ENCODE measurements at regions of chr11 and their contacts with region 1.

Region 1: GRCh38 chr11:8263769-8264410 is at the start of gene LMO1:
- DNase-seq: peak; percentile 91
- ATAC-seq: peak; percentile 53
- H3K4me3 Mint-ChIP-seq: peak within 1 kb of the TSS; percentile 71
- H3K27ac Mint-ChIP-seq: no peak within 1 kb of the TSS
- H3K4me1 Mint-ChIP-seq: peaks cover 16% of the 10 kb centered on the region
- H3K27me3 Mint-ChIP-seq: peaks cover 86% of the 10 kb centered on the region
- CTCF ChIP-seq: peak; percentile 76
- total RNA-seq, gene LMO1: 0.39 to 0.44 TPM (median 0.44 TPM) in 3 replicates

Region 2: DNA sequence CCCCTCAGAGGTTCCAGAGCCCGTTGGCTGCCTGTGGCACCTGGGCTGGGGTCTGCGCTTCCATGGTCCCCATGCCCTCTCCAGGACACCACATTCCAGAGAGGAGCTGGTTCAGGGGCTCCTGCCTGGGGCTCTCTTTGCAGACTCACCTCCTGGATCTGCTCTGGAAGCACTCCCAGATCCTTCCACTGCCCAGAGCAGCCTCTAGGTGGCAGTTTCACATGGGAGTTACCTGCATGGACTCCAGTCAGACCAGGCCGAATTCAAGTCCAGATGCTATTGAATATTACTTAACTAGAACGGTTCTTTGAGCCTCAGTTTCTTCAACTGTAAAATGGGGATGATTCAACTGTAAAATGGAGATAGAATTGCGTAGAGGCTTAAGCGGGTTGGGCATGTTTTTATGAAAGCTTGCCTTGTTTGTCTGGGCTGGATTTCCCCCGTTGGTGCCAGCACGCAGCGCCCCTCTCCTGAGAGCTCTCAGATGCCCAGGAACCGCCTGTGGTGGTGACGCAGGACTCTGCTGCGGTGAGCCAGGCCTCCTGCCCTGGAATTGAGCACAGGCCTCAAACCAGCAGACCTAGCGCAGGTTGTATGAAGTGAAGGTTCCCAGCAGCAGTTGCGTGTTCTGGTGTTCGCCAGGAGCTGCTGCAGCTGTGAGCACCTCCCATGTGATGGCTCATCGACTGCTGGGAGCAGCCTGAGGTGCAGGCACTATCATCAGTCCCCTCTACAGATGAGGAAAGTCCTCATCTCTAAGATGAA is 44.5 kb before region 1 on chr11:
- CTCF ChIA-PET with region 1: interaction called, 60 read pairs
- POLR2A ChIA-PET with region 1: no interaction called
- DNase-seq: peak; percentile 75
- ATAC-seq: peak; percentile 92
- H3K4me3 Mint-ChIP-seq: no peak overlapping the region
- H3K27ac Mint-ChIP-seq: no peak overlapping the region
- H3K4me1 Mint-ChIP-seq: peaks cover 12% of the 10 kb centered on the region
- H3K27me3 Mint-ChIP-seq: no peaks in the 10 kb centered on the region; the same call in 1 of the 2 replicates
- CTCF ChIP-seq: peak; percentile 54

Region 3: DNA sequence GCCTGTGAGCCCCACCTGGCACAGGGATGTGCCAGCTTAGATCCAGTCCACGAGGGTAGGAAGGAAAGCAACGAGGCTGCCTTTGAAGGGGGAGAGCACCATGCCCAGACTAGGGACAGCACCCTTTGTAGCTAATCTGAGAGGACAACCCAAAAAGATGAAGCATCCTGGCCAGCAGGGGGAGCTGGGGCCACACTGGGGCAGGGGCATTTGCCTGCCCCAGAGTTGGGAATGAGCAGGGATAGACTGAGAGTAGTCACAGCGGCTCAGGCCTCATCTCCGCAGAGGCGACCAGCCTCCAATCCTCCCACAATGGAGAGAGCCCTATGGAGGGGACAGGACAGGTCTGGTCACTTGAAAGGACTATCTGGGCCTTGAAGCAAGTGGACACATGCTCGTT is 16.6 kb before region 1 on chr11:
- CTCF ChIA-PET with region 1: interaction called, 97 read pairs
- POLR2A ChIA-PET with region 1: interaction called, 3 read pairs
- DNase-seq: peak; percentile 74
- ATAC-seq: peak; percentile 43
- H3K4me3 Mint-ChIP-seq: no peak overlapping the region
- H3K27ac Mint-ChIP-seq: no peak overlapping the region
- H3K4me1 Mint-ChIP-seq: peaks cover 13% of the 10 kb centered on the region
- H3K27me3 Mint-ChIP-seq: no peaks in the 10 kb centered on the region; the same call in 1 of the 2 replicates
- CTCF ChIP-seq: peak; percentile 49

Region 4: DNA sequence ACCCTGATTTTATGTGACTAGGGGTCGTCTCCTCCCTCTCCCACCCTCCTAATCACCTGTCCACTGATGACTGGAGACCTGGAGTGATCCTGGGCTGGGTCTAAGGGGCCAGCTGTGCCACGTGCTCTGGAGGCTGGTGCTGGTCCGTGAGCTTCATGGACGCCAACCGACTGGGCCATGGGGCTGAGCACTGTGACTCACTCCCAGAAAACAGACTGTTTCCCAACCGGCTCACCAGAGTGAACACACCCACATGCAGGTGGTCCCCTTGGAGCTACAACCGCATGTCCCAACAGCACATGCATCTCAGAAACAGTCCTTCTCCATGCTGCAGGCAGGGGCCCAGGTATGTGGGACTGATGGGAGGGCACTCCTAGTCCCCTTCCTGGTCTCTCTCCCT is 13.8 kb after region 1 on chr11:
- CTCF ChIA-PET with region 1: interaction called, 32 read pairs
- POLR2A ChIA-PET with region 1: no interaction called
- DNase-seq: no peak
- ATAC-seq: no peak
- H3K4me3 Mint-ChIP-seq: no peak overlapping the region
- H3K27ac Mint-ChIP-seq: no peak overlapping the region
- H3K4me1 Mint-ChIP-seq: peaks cover 4% of the 10 kb centered on the region
- H3K27me3 Mint-ChIP-seq: peaks cover 15% of the 10 kb centered on the region
- CTCF ChIP-seq: no peak

Region 5: GRCh38 chr11:8290081-8290810 is 26.4 kb after region 1 on chr11:
- CTCF ChIA-PET with region 1: interaction called, 10 read pairs
- POLR2A ChIA-PET with region 1: no interaction called
- DNase-seq: no peak
- ATAC-seq: no peak
- H3K4me3 Mint-ChIP-seq: no peak overlapping the region
- H3K27ac Mint-ChIP-seq: no peak overlapping the region
- H3K4me1 Mint-ChIP-seq: 0 out of 2 replicates have a peak, but pooled peaks cover 2% of the 10 kb centered on the region
- H3K27me3 Mint-ChIP-seq: peaks cover 5% of the 10 kb centered on the region; the same call in 1 of the 2 replicates
- CTCF ChIP-seq: no peak

Region 6: DNA sequence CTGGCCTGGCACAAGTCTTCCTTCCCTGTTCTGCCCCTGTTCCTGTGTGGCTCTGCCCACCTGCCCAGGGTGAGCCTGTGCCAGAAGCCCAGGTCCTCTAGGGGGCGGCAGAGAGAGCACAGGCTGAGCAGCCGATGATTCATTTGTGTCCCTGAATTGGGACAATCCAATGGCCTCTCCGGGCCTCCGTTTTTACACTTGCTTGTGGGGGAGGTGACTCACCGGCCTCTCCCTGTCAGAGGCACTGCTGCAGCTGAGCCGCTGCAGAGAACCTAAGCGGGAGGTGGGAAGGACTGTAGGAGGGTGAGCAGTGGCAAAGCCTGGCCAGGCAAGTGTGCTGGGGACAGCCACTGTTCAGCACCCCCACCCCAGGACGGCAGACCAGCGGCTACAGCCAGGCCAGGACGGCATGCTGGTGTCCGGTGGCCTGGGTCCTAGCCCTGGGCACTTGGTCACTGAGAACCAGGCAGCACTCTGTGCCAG is 65.0 kb after region 1 on chr11:
- CTCF ChIA-PET with region 1: interaction called, 14 read pairs
- POLR2A ChIA-PET with region 1: no interaction called
- DNase-seq: peak; percentile 91
- ATAC-seq: peak; percentile 84
- H3K4me3 Mint-ChIP-seq: peak overlapping the region; percentile 42
- H3K27ac Mint-ChIP-seq: no peak overlapping the region
- H3K4me1 Mint-ChIP-seq: peaks cover 37% of the 10 kb centered on the region
- H3K27me3 Mint-ChIP-seq: no peaks in the 10 kb centered on the region
- CTCF ChIP-seq: peak; percentile 80

Region 7: GRCh38 chr11:8354622-8355415 is 90.9 kb after region 1 on chr11:
- CTCF ChIA-PET with region 1: interaction called, 13 read pairs
- POLR2A ChIA-PET with region 1: no interaction called
- DNase-seq: no peak
- ATAC-seq: peak; percentile 11; the same call in 1 of the 2 replicates
- H3K4me3 Mint-ChIP-seq: no peak overlapping the region
- H3K27ac Mint-ChIP-seq: no peak overlapping the region; the same call in 1 of the 2 replicates
- H3K4me1 Mint-ChIP-seq: peaks cover 15% of the 10 kb centered on the region
- H3K27me3 Mint-ChIP-seq: no peaks in the 10 kb centered on the region; the same call in 1 of the 2 replicates
- CTCF ChIP-seq: no peak